ENCODE measurements at regions of chr5 and their contacts with region 1.

Region 1: DNA sequence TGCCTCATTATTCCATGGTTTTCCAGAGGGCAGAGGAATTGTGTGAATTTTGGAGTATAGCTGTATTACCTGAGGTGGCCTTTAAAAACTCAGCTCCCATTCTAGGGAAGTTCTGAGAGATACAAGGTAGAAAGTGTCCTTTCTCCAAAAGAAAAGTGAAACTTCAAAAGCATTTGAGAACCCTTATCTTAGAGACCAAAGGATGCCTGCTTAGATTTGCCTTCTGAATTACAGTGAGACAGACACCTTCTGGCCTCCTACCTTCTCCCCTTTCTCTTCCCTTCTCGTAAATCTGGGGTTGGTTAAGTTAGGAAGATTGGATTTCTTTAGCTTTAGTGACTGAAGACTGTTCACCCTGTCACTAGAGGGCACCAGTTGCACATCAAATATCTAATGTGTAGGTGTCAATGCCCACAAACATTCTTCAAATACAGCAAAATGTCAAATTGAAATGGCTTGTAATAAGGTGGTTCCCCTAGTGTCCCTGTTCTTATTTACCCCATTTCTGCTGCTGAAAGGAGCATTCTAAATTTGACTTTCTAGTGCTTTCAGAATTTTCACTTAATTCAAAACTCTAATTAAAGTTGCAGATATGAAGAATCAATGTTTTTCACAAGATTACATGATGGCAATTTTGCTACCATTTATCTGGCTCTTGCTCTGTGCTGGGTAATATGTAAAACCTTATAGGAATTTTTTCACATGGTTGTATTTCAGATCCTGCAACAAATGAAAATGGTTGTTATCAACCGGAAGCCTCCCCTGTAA is 46.7 kb downstream of the PRRC1 start:
- DNase-seq: peak; percentile 36
- H3K4me3 ChIP-seq: no peak overlapping the region
- H3K27ac ChIP-seq: no peak overlapping the region
- H3K4me1 ChIP-seq: peaks cover 0 to 15% (median 2%) of the 10 kb centered on the region in 4 donors
- H3K27me3 ChIP-seq: no peaks in the 10 kb centered on the region
- CTCF ChIP-seq: peak; percentile 61 to 71 (median 64)
- EP300 ChIP-seq: no peak
- POLR2A ChIP-seq: no peak

Region 2: DNA sequence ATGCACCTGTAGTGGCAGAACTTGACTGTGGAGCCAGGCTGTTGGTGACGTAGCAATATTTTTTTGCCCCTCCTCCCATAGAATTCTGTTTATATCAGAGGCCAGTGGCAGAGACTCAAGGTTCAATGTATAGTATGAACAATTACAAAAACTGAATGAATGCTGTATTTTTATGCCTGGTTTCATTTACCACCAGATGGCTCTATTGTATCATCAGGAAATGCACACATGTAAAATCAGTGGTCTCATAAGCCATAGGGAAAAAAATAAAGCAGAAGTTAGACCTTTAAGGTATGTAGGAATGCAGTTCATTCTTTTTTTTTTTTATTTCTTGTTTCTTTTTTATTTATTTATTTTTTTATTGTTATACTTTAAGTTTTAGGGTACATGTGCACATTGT is 182.6 kb after region 1 on chr5:
- in situ Hi-C with region 1: no loop called
- intact Hi-C with region 1: loop called (anchors 10 kb)
- DNase-seq: no peak
- H3K4me3 ChIP-seq: no peak overlapping the region
- H3K27ac ChIP-seq: no peak overlapping the region
- H3K4me1 ChIP-seq: no peaks in the 10 kb centered on the region
- H3K27me3 ChIP-seq: no peaks in the 10 kb centered on the region
- CTCF ChIP-seq: peak; percentile 39 to 47 (median 43)
- EP300 ChIP-seq: no peak
- POLR2A ChIP-seq: no peak

Region 3: GRCh38 chr5:127870914-127871313 is 306.7 kb after region 1 on chr5:
- in situ Hi-C with region 1: loop called in 1 of 4 experiments (anchors 25 kb)
- intact Hi-C with region 1: no loop called
- DNase-seq: peak; percentile 56
- H3K4me3 ChIP-seq: no peak overlapping the region
- H3K27ac ChIP-seq: peak overlapping the region in 1 of 4 donors; percentile 14
- H3K4me1 ChIP-seq: peaks cover 5 to 35% (median 9%) of the 10 kb centered on the region in 4 donors
- H3K27me3 ChIP-seq: no peaks in the 10 kb centered on the region
- CTCF ChIP-seq: no peak
- EP300 ChIP-seq: no peak
- POLR2A ChIP-seq: no peak

Region 4: DNA sequence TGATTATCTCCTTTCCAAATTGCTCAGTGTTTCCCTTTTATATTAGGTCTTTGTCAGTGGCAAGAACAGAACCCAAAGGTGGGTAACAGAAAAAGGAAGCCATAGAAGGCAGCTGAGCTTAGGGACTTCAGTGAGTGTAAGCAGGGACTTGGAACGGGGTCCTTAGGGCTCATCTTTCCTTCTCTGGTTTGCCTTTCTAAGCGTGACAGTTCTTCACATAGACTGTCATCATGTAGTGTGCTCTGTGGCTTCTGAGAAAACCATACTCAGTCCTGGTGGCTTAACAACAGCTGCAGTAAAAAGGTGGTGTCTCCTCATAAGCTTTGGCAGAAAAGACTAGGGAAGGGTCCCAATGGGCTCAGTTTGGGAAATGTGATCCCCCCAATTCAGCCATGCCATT is 628.2 kb after region 1 on chr5:
- in situ Hi-C with region 1: loop called in 2 of 4 experiments (anchors 5 to 10 kb)
- intact Hi-C with region 1: no loop called
- DNase-seq: no peak
- H3K4me3 ChIP-seq: no peak overlapping the region
- H3K27ac ChIP-seq: no peak overlapping the region
- H3K4me1 ChIP-seq: peaks cover 0 to 3% (median 0%) of the 10 kb centered on the region in 4 donors
- H3K27me3 ChIP-seq: no peaks in the 10 kb centered on the region
- CTCF ChIP-seq: no peak
- EP300 ChIP-seq: no peak
- POLR2A ChIP-seq: no peak